Left ventricle myocardium superior (tissue), 1 donor: ENCODE measurements at regions of chr4 and their contacts with region 1.

Region 1: GRCh38 chr4:119041951-119042560 is 93.6 kb upstream of the MYOZ2 start:
- DNase-seq: no peak
- ATAC-seq: peak; percentile 59

Region 2: DNA sequence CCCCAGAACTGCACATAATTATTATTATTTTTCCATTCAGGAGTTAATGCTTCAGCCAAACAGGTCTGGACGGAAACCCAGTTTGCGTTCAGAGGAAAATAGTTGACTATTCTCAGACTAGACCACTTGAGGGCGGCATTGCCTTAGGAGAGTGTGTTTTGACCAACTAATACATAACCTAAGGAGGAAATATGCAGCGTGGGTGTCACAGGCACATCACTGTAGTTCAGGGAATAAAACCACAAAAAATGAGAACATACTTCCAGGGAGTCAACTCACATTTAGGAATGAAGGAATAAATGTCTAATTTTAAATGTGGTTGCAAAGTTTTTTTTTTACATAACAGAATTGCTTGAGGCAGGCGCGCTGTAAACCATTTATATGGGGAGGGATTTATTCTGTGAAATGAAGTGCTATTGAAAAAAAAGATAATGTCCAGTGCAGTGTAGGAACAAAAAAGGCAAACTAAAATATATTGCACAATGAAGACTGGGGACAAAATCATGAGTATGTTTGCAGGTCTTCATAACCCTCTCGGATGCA is 60.1 kb before region 1 on chr4:
- intact Hi-C with region 1: loop called (anchors 10 kb)
- DNase-seq: no peak
- ATAC-seq: peak; percentile 73

Region 3: DNA sequence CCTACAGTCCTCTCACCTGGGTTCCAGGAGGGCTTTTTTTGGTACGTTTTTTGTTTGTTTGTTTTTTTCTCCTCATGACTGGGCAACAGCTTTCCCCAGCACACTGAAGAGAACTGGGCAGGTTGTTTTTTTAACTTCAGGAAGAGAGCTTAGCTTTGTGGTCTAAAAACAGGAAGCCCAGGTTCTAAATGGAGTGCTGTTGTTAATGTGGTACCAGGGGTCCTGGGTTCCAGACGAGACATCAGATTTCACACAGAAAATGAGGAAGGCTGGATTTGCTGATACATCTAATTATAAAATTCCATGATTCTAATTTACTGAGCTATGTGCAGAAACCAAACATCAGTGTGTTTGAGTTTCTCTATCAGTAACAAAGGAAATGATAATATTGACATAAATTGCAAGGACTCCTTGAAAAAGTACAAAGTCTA is 97.8 kb after region 1 on chr4:
- intact Hi-C with region 1: loop called (anchors 10 kb)
- DNase-seq: no peak
- ATAC-seq: no peak

Region 4: GRCh38 chr4:119286377-119287002 is 244.4 kb after region 1 on chr4:
- intact Hi-C with region 1: loop called (anchors 10 kb)
- DNase-seq: no peak
- ATAC-seq: peak; percentile 59